AG04449 (cell line): ENCODE measurements at regions of chr12 and their contacts with region 1.

Region 1: GRCh38 chr12:52372216-52373154 is 5.2 kb upstream of the KRT85 start:
- DNase-seq: peak; percentile 61
- H3K4me3 ChIP-seq: no peak overlapping the region
- CTCF ChIP-seq: peak; percentile 92

Region 2: DNA sequence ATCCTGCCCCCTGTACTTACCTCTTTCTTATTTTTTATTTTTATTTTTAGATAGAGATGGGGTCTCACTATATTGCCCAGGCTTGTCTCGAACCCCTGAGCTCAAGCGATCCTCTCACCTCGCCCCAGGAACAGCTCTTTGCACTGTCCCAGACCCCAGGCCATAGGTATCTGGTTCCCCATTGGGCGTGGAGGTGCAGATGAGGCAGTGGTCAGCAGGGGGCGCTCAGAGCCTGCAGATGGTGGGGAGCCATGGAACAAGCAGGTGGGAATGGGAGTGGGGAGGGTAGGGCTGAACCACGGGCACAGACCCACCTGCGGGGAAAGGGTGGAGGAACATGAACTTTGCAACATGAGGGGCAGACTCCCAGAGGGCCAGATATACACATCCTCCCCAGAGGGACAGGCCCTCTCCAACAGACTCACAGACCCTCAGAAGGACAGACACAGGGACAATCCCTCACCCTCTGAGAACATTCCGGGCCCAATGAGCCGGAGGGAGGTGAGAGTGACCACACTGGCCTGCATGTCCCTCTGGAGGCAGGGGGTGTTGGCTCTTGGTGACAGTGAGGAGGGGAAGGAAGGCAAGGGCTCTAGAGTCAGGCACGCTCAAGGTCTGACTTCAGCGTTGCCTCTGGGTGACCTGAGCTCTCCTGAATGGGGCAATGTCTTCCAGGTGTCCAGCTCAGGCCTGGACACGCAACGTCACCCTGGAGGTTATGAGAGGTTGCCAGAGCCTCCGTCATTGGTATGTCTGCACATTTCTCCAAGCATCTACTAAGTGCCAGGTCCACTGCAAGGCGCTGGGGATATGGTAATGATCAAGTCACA is 215.5 kb before region 1 on chr12:
- CTCF ChIA-PET with region 1: interaction called, 65 read pairs
- POLR2A ChIA-PET with region 1: no interaction called
- DNase-seq: no peak
- H3K4me3 ChIP-seq: no peak overlapping the region
- CTCF ChIP-seq: peak; percentile 97

Region 3: DNA sequence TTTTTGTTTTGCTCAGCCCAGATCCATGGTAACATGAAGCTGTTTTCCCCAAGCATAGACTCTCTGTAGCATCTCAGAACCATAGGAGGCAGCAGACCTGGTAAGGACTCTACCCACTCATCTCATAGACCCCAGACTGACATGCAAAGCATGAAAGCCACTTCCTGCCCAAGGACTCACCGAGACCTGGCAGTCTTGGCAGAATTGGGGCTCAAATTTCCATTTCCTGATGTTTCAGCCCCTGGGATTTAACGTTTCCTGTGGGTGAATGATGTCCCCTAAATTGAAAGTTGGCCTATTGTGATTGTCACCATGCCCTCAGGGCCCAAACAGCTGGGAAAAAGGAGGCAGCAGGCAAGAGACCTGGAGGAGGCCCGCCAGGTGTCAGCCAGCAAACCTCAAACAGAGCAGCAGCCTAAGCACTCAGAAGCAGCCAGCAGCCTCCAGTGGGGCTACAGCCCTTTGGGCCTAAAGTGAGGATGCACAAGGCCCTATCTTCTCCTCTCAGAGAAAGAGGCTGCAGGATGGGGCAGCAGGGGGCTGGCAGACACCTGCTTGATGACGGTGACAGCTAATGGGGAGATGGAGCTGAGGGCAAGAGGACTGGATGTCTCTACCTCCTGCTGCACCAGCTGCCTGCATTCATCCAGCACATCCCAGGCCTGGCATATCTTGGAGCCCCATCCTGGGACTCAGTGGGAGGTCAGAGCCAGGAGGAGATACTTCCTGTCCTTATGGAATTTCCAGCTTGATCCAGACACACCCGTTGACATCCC is 13.7 kb before region 1 on chr12:
- CTCF ChIA-PET with region 1: interaction called, 60 read pairs
- POLR2A ChIA-PET with region 1: no interaction called
- DNase-seq: no peak
- H3K4me3 ChIP-seq: no peak overlapping the region
- CTCF ChIP-seq: no peak

Region 4: GRCh38 chr12:52506858-52507715 is 134.6 kb after region 1 on chr12:
- CTCF ChIA-PET with region 1: interaction called, 82 read pairs
- POLR2A ChIA-PET with region 1: no interaction called
- DNase-seq: peak; percentile 51
- H3K4me3 ChIP-seq: no peak overlapping the region
- CTCF ChIP-seq: peak; percentile 46

Region 5: DNA sequence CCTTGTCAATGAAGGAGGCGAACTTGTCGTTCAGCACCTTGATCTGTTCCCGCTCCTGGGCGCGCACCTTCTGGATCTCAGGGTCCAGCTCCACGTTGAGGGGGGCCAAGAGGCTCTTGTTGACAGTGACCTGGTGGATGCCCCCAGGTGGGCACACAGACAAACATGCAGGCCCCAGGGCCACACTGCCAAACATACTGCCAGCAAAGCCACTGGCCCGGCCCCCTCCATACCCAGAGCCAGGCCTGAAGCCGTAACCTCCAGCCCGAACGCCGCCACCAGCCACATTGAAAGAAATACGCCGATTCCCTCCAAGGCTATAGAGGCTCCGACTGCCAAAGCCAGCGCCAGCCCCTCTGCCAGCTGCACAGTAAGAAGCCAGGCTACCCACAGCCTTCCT is 200.8 kb after region 1 on chr12:
- CTCF ChIA-PET with region 1: interaction called, 83 read pairs
- POLR2A ChIA-PET with region 1: no interaction called
- DNase-seq: no peak
- H3K4me3 ChIP-seq: no peak overlapping the region
- CTCF ChIP-seq: no peak

Region 6: DNA sequence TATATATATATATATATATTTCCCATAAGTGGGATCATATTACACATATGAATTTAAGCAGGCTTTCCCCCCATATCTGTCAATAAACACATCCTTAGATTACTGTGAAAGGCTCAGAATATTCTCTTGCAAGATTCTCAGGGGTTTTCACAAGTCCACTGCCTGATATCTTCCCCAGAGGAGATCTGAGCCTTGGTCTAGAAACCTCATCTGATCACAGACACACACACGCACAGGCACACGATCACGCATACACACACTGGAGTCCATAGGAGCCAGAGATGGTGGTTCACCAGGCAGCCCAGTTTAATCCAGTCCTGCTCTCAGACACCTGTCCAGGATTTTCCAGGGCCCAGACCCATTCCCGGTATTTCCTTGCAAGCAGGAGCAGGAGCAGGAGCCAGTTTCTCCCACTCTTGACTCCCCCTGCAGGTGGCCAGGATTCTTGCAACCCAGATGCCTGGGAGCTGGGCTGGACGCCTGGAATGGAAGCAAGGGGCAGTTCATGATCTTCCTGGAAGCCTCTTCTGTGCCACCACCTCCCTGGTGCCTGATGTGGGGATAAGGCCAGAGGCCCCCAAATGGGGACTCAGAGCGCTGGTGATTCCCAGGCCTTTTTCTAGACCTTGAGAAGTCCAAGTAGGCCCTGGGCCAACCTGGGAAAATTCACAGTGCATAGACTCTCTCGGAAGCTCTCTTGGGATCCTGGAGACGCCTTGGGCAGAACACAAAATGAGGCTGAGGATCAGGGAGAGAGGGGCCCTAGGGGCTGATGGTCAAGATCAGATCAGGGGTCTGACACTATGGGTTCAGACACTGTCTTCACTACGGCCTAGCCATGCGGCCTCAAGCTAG is 492.8 kb after region 1 on chr12:
- CTCF ChIA-PET with region 1: interaction called, 83 read pairs
- POLR2A ChIA-PET with region 1: no interaction called
- DNase-seq: no peak
- H3K4me3 ChIP-seq: no peak overlapping the region
- CTCF ChIP-seq: peak; percentile 94